ENCODE measurements at regions of chrX and their contacts with region 1.

Region 1: GRCh38 chrX:74545880-74546523 is 68.4 kb downstream of the RLIM start:
- DNase-seq: no peak
- ATAC-seq: no peak
- H3K4me3 Mint-ChIP-seq: no peak overlapping the region
- H3K27ac Mint-ChIP-seq: no peak overlapping the region
- H3K4me1 Mint-ChIP-seq: peaks cover 8% of the 10 kb centered on the region
- H3K27me3 Mint-ChIP-seq: peaks cover 4% of the 10 kb centered on the region

Region 2: GRCh38 chrX:74382613-74383012 is 163.4 kb before region 1 on chrX:
- CTCF ChIA-PET with region 1: interaction called, 16 read pairs
- POLR2A ChIA-PET with region 1: no interaction called
- DNase-seq: peak; percentile 61
- ATAC-seq: peak; percentile 65
- H3K4me3 Mint-ChIP-seq: no peak overlapping the region
- H3K27ac Mint-ChIP-seq: no peak overlapping the region
- H3K4me1 Mint-ChIP-seq: no peaks in the 10 kb centered on the region
- H3K27me3 Mint-ChIP-seq: peaks cover 6% of the 10 kb centered on the region

Region 3: DNA sequence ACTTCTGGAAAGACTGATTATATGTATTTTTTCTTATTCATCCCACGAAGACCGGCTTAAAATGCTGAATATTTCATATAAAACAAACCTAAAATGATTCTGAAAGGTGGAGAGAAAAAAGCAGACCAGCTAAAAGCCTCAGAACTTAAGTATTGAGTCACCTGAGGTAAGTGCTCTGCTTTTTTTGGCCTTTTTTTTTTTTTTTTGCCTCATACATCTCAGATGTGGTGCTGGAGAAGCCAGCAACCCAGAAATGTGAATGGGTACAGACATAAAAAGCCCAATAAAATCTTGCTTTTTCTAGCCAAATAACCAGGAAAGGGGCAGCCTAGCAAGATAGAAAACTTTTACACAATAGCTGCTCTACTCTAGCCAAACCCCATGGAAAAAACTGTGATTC is 11.4 kb after region 1 on chrX:
- CTCF ChIA-PET with region 1: no interaction called
- POLR2A ChIA-PET with region 1: no interaction called
- DNase-seq: no peak
- ATAC-seq: no peak
- H3K4me3 Mint-ChIP-seq: no peak overlapping the region
- H3K27ac Mint-ChIP-seq: no peak overlapping the region
- H3K4me1 Mint-ChIP-seq: no peaks in the 10 kb centered on the region
- H3K27me3 Mint-ChIP-seq: no peaks in the 10 kb centered on the region

Measured in activated CD8-positive, alpha-beta T cell treated with anti-CD3 and anti-CD28 coated beads, Interleukin-2, amount 10 ng/mL, durations not matched to agents 7 days and 5 days (primary cell).